ENCODE measurements at regions of chr16 and their contacts with region 1.

Region 1: DNA sequence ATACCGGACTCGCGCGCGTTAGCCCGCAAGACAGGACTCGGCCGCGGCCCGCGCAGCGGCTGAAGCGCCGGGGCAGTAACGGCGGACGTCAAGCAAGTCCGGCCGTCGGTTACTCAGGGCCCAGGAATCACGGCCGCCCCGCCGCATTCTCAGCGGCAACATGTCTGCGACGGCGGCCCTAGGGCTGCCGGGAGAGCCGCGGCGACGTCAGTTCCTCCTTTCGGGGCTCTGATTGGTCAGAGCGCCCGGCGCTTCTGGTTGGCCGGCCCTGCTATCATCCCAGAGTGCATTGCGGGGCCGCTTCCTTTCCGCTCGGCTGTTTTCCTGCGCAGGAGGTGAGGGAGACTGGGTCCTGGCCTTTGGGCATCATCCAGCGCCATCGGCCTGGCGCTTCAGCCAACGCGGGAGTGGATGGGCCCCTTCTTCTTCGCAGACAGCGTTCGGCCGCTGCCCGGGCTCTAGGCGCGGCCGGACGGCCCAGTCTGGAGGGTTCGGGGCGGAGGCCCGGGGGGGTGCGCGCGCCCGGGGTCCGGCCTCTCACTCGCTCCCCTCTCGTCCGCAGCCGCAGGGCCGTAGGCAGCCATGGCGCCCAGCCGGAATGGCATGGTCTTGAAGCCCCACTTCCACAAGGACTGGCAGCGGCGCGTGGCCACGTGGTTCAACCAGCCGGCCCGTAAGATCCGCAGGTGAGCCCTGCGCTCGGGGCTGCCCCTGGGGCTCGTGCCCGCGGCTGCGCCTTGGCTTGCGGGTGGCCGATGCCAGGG is at the start of gene RPL13:
- DNase-seq: peak; percentile 91
- H3K4me3 Mint-ChIP-seq: peak within 1 kb of the TSS; percentile 98
- H3K27ac Mint-ChIP-seq: peak within 1 kb of the TSS; percentile 99
- H3K4me1 Mint-ChIP-seq: peaks cover 48% of the 10 kb centered on the region
- H3K27me3 Mint-ChIP-seq: no peaks in the 10 kb centered on the region
- total RNA-seq, gene RPL13: 2,076 and 2,133 TPM in 2 replicates

Region 2: GRCh38 chr16:88811769-88812512 is 748.6 kb before region 1 on chr16 and contains the start of gene APRT:
- intact Hi-C with region 1: loop called (anchors 5 kb)
- DNase-seq: peak; percentile 97
- H3K4me3 Mint-ChIP-seq: peak within 1 kb of the TSS; percentile 90
- H3K27ac Mint-ChIP-seq: peak within 1 kb of the TSS; percentile 98
- H3K4me1 Mint-ChIP-seq: peaks cover 11% of the 10 kb centered on the region
- H3K27me3 Mint-ChIP-seq: no peaks in the 10 kb centered on the region
- total RNA-seq, gene APRT: 301 and 303 TPM in 2 replicates

Region 3: DNA sequence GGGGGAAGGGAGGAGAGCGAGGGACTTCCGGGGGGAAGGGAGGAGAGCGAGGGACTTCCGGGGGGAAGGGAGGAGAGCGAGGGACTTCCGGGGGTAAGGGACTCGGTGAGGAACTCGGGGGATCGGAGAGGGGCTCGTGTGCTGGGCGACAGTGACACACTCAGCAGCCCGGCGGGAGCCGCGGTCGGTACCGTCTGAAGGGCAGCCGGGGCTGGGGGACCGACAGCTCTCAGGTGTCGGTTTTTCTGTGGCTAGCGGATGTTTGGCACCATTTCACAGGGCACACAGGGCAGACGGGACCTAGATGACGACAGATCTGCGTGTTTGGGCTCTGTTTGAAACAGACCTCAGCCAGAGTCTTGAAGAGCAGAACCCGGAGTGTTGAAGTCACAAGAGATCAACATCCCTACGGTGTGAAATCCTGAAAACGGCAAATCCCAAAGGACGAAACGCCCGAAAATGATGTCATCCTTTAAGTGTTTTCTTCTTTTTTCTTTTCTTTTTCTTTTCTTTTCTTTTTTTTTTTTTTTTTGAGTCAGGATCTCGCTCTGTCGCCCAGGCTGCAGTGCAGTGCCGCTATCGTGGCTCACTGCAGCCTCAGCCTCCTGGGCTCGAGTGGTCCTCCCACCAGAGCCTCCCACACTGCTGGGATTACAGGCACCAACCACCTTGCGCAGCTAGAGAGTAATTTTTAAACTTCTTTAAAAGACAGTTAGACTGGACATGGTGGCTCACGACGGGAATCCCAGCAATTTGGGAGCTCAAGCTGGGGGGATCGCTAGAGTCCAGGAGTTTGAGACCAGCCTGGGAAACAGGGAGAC is 319.2 kb before region 1 on chr16:
- intact Hi-C with region 1: loop called (anchors 2 kb)
- DNase-seq: peak; percentile 72
- H3K4me3 Mint-ChIP-seq: peak overlapping the region; percentile 95
- H3K27ac Mint-ChIP-seq: peak overlapping the region; percentile 97
- H3K4me1 Mint-ChIP-seq: peaks cover 5% of the 10 kb centered on the region
- H3K27me3 Mint-ChIP-seq: peaks cover 2% of the 10 kb centered on the region

Region 4: DNA sequence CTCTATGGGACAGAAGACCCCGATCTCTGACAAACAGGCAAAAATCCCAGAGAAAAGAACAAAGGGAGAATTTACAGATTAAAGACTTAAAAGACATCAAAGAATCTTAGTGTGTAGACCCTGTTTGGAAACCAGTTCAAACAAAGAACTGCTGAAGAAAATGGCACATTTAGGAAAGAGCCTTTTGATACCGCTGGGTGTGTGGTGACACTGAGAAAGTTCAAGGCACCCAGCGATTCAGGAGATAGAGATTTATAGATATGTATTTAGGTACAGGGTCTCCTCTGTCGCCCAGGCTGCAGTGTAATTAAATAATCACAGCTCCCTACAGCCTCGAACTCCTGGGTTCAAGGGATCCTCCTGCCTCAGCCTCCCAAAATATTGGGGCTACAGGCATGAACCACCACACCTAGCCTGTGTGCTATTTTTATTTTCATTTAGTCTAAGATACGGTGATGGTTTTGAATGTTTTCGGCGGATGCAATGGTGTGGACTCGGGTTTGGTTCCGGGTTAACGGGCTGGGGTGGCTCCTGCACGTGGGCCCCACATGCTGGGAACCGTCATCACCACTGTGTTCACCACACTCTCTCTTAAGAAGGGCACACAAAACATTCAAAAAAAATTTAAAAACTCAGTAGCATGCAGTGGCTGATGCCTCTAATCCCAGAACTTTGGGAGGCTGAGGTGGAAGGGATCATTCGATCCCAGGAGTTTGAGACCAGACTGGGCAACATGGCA is 229.0 kb before region 1 on chr16:
- intact Hi-C with region 1: loop called (anchors 1 kb)
- DNase-seq: no peak
- H3K4me3 Mint-ChIP-seq: peak overlapping the region; percentile 31
- H3K27ac Mint-ChIP-seq: peak overlapping the region; percentile 2
- H3K4me1 Mint-ChIP-seq: peaks cover 71% of the 10 kb centered on the region
- H3K27me3 Mint-ChIP-seq: no peaks in the 10 kb centered on the region

Region 5: DNA sequence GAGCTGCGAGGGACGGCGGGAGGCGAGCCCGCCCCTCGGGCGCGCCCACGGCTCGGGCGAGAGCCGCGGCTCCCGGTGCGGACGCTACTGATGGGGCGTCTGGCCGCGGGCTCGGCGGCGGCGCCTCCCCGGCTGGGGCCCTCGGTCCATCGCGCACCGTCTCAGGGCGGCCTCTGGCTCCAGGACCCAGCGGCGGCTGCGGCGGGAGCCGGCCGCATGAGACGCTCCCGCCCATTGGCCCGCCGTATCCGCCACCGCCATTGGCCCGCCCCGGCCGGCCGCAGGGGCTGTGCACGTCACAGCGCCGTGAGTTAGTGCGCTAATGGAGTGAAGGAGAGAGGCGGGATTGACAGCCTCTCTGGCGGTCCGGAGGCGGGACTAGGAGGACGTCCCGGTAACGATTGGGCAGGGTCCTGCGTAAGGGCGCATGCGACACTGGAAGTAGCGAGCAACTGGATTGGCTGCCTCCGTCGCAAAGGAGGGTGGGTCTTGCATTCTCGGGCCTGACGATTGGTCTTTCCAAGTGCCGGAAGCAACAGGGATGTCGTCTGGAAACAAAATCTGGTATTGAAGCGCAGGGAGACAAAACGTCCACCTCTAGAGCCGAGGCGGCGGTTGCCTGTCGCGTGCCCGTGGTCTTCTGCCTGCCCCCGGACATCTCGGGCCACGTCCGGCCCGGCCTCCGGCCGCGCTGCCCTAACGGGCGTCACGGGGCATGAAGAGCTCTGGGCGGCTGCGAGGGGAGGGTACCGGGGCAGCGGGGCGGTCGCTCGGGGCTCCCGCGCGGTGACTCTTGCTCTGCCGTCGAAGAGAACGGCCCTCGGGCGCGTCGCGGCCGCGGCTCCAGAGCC is 69.9 kb before region 1 on chr16 and contains the start of gene ANKRD11:
- intact Hi-C with region 1: loop called (anchors 1 kb)
- DNase-seq: peak; percentile 99
- H3K4me3 Mint-ChIP-seq: peak within 1 kb of the TSS; percentile 96
- H3K27ac Mint-ChIP-seq: peak within 1 kb of the TSS; percentile 99
- H3K4me1 Mint-ChIP-seq: peaks cover 52% of the 10 kb centered on the region
- H3K27me3 Mint-ChIP-seq: no peaks in the 10 kb centered on the region
- total RNA-seq, gene ANKRD11: 176 and 179 TPM in 2 replicates

Region 6: DNA sequence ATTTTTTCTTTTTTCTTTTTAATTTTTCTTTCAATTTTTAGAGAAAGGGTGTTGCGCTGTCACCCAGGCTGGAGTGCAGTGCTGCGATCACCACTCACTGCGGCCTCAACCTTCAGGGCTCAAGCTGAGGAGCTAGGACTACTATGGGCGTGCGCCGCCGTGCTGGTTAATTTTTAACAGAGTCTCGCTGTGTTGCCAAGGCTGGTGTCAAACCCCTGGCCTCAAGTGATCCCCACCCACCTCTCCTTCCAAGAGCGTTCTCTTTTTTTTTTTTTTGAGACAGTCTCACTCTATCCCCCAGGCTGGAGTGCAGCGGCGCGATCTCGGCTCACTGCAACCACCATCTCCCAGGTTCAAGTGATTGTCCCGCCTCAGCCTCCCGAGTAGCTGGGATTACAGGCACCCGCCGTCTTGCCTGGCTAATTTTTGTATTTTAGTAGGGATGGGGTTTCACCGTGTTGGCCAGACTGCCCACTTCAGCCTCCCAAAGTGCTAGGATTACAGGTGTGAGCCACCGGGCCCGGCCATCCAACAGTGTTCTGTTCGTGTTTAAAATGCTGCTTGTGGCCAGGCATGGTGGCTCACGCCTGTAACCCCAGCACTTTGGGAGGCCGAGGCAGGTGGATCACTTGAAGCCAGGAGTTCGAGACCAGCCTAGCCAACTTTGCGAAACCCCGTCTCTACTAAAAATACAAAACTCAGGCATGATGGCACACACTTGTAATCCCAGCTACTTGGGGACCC is 14.6 kb before region 1 on chr16:
- intact Hi-C with region 1: no loop called
- DNase-seq: no peak
- H3K4me3 Mint-ChIP-seq: no peak overlapping the region
- H3K27ac Mint-ChIP-seq: no peak overlapping the region
- H3K4me1 Mint-ChIP-seq: peaks cover 11% of the 10 kb centered on the region
- H3K27me3 Mint-ChIP-seq: no peaks in the 10 kb centered on the region

Region 7: GRCh38 chr16:89574681-89575246 is 14.2 kb after region 1 on chr16:
- intact Hi-C with region 1: no loop called
- DNase-seq: peak; percentile 33
- H3K4me3 Mint-ChIP-seq: peak overlapping the region; percentile 39
- H3K27ac Mint-ChIP-seq: no peak overlapping the region
- H3K4me1 Mint-ChIP-seq: peaks cover 10% of the 10 kb centered on the region
- H3K27me3 Mint-ChIP-seq: peaks cover 26% of the 10 kb centered on the region

Region 8: GRCh38 chr16:89641458-89642119 is 81.0 kb after region 1 on chr16:
- intact Hi-C with region 1: loop called (anchors 2 kb)
- DNase-seq: no peak
- H3K4me3 Mint-ChIP-seq: no peak overlapping the region
- H3K27ac Mint-ChIP-seq: no peak overlapping the region
- H3K4me1 Mint-ChIP-seq: peaks cover 10% of the 10 kb centered on the region
- H3K27me3 Mint-ChIP-seq: peaks cover 2% of the 10 kb centered on the region